Activated B cell treated with CpG ODN at 0.5 μM for 24 hours (primary cell): ENCODE measurements at regions of chr2 and their contacts with region 1.

Region 1: DNA sequence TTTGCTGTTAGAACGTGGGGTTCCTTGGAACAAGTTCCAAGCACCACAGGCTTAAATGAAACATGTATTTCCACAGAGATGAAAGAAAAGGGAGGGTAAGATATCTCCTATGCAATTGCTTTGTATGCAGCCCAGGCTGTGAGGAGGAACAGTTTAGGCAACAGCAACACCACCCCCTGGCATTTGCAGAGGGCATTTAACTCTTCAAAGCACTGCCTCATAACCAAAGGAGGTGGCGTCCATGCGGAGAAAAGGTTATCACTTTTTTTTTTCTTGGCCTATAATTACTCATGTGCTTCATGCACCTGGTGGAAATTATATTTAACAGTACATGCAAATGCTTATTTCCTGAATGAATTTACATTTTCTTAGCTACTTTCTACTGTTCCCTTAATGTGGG is 286.0 kb downstream of the LPIN1 start:
- DNase-seq: no peak
- ATAC-seq: peak; percentile 86
- H3K4me3 Mint-ChIP-seq: peak overlapping the region; percentile 62
- H3K27ac Mint-ChIP-seq: peak overlapping the region; percentile 74
- H3K4me1 Mint-ChIP-seq: peaks cover 64% of the 10 kb centered on the region
- H3K27me3 Mint-ChIP-seq: no peaks in the 10 kb centered on the region
- CTCF ChIP-seq: no peak

Region 2: GRCh38 chr2:11829947-11830707 is 202.3 kb before region 1 on chr2:
- CTCF ChIA-PET with region 1: interaction called, 8 read pairs
- POLR2A ChIA-PET with region 1: no interaction called
- intact Hi-C with region 1: loop called (anchors 1 kb)
- DNase-seq: peak; percentile 40
- ATAC-seq: peak; percentile 66
- H3K4me3 Mint-ChIP-seq: peak overlapping the region; percentile 75
- H3K27ac Mint-ChIP-seq: peak overlapping the region; percentile 75
- H3K4me1 Mint-ChIP-seq: peaks cover 64% of the 10 kb centered on the region
- H3K27me3 Mint-ChIP-seq: no peaks in the 10 kb centered on the region
- CTCF ChIP-seq: no peak

Region 3: GRCh38 chr2:11967946-11968465 is 64.4 kb before region 1 on chr2:
- CTCF ChIA-PET with region 1: no interaction called
- POLR2A ChIA-PET with region 1: no interaction called
- intact Hi-C with region 1: no loop called
- DNase-seq: no peak
- ATAC-seq: no peak
- H3K4me3 Mint-ChIP-seq: no peak overlapping the region
- H3K27ac Mint-ChIP-seq: no peak overlapping the region
- H3K4me1 Mint-ChIP-seq: peaks cover 14% of the 10 kb centered on the region
- H3K27me3 Mint-ChIP-seq: no peaks in the 10 kb centered on the region
- CTCF ChIP-seq: no peak

Region 4: GRCh38 chr2:12005886-12006681 is 26.3 kb before region 1 on chr2:
- CTCF ChIA-PET with region 1: interaction called, 3 read pairs
- POLR2A ChIA-PET with region 1: no interaction called
- intact Hi-C with region 1: loop called (anchors 1 kb)
- DNase-seq: no peak
- ATAC-seq: peak; percentile 77
- H3K4me3 Mint-ChIP-seq: peak overlapping the region; percentile 46
- H3K27ac Mint-ChIP-seq: peak overlapping the region; percentile 56
- H3K4me1 Mint-ChIP-seq: peaks cover 57% of the 10 kb centered on the region
- H3K27me3 Mint-ChIP-seq: no peaks in the 10 kb centered on the region
- CTCF ChIP-seq: no peak

Region 5: GRCh38 chr2:12057436-12058166 is 25.2 kb after region 1 on chr2:
- CTCF ChIA-PET with region 1: interaction called, 3 read pairs
- POLR2A ChIA-PET with region 1: no interaction called
- intact Hi-C with region 1: loop called (anchors 1 kb)
- DNase-seq: peak; percentile 57
- ATAC-seq: peak; percentile 88
- H3K4me3 Mint-ChIP-seq: peak overlapping the region; percentile 47
- H3K27ac Mint-ChIP-seq: peak overlapping the region; percentile 50
- H3K4me1 Mint-ChIP-seq: peaks cover 67% of the 10 kb centered on the region
- H3K27me3 Mint-ChIP-seq: no peaks in the 10 kb centered on the region
- CTCF ChIP-seq: no peak

Region 6: DNA sequence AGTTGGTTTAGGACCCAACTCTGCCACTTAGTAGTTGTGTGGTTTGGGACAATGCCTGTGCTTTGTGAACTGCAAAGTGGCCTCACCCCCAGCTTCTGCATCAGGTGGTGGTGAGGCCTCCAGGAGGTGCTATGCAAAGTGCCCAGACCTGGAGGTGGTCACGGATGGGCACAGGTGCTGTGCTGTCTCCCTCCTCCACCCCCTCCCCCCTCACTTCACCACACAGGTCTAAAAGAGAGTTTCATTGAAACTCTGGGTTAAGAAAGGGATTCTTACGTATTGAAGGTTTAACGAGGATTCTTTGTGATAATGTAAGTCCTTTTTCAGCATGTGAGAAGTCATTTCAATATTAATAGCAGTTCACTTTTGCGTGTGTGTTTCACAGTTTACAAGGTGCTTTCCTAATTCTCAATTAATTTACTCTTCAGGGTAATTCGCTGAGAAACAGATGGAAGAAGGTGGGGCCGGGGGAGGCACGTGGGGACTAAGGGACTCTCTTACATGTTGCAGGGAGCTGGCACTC is 83.9 kb after region 1 on chr2:
- CTCF ChIA-PET with region 1: no interaction called
- POLR2A ChIA-PET with region 1: no interaction called
- intact Hi-C with region 1: loop called (anchors 5 kb)
- DNase-seq: no peak
- ATAC-seq: peak; percentile 73
- H3K4me3 Mint-ChIP-seq: peak overlapping the region; percentile 51
- H3K27ac Mint-ChIP-seq: peak overlapping the region; percentile 78
- H3K4me1 Mint-ChIP-seq: peaks cover 63% of the 10 kb centered on the region
- H3K27me3 Mint-ChIP-seq: no peaks in the 10 kb centered on the region
- CTCF ChIP-seq: no peak